HCT116 (cell line): ENCODE measurements at regions of chr9 and their contacts with region 1.

Region 1: DNA sequence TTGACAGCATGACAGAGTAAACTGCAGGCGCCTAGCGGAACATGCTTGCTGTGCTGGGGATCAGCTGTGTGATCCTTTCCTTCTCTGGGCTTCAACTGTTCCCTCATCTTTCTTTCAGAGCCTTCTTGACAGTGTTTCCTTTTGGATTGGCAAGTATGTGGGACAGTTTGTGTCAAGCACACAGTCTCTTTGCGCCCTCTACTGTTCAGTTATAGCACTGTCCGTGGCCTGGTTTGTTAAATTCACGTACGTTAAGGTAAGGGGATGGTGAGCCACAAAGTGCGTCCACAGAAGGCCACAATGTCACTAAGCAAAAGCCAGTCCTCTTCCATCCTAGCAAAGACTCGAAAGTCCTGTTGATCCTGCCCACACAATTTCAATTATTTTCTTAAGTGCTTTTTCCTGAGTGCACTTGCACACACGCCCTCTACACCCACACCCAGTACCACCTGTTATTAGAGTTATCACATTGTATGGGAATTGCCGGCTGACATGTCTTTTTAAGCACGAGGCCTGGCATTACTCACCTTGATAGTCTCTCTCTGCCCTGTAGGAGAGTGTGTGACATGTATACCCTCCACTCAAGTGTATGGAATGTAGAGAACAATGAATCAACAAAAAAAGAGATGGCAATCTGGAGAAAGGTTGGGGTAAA is 22.5 kb upstream of the PTPN3 start:
- DNase-seq: peak; percentile 72
- ATAC-seq: peak; percentile 99
- H3K4me3 ChIP-seq: no peak overlapping the region
- H3K27ac ChIP-seq: no peak overlapping the region
- H3K4me1 ChIP-seq: peaks cover 0 to 3% of the 10 kb centered on the region in 2 experiments; a peak in 1 of 4 replicates
- H3K27me3 ChIP-seq: no peaks in the 10 kb centered on the region; the same call in 1 of the 2 replicates
- CTCF ChIP-seq: peak; percentile 89 to 97 (median 91)
- POLR2A ChIP-seq: no peak
- RAD21 ChIP-seq: peak; percentile 97

Region 2: GRCh38 chr9:109192732-109193361 is 327.8 kb before region 1 on chr9:
- CTCF ChIA-PET with region 1: no interaction called
- POLR2A ChIA-PET with region 1: no interaction called
- RAD21 ChIA-PET with region 1: no interaction called
- intact Hi-C with region 1: loop called (anchors 5 kb)
- DNase-seq: peak; percentile 15
- ATAC-seq: peak; percentile 81
- H3K4me3 ChIP-seq: no peak overlapping the region
- H3K27ac ChIP-seq: no peak overlapping the region
- H3K4me1 ChIP-seq: no peaks in the 10 kb centered on the region
- H3K27me3 ChIP-seq: no peaks in the 10 kb centered on the region
- CTCF ChIP-seq: peak; percentile 61 to 69 (median 61); a peak in 5 of 6 replicates
- POLR2A ChIP-seq: no peak
- RAD21 ChIP-seq: peak; percentile 83

Region 3: DNA sequence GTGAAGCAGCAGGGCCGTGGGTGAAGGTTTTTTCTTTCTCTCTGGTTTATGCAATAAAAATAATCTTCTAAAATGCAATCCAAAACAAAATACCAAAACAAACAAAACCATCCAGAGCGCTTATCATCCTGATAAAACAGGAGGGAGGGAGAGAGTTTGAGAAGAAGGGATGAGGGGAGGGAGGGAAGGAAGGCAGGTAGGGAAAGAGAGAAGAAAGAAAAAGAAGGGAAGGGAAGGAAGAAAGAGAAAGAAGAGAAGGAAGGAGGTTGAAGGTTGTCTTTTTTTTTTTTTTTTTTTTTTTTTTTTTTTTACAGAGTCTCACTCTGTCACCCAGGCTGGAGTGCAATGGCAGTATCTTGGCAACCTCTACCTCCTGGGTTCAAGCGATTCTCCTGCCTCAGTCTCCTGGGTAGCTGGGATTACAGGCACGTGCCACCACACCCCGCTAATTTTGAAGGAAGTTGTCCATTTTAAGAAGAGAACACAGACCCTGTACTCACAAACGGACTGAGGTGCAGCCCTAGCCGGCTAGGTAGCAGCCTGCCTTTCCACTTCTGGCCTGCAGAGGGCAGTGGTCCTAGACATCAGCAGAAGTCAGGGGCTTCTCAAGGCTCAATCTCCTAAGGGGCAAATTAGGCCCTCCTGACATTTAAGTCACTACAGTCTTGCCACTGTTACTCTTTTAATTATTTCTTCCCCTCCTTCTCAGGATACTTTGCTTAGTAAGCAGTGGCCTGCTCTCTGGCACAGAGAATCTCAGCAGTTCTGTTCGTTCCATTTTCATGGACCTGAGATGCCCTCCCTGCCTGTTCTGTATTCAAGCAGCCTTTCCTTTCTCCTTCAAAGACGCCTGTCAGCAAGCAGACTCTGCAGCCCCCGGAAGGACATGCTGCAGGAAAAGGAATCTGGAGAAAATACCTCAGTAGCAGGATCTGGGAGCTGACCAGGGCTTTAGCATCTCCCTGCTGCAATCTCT is 276.2 kb before region 1 on chr9:
- CTCF ChIA-PET with region 1: no interaction called
- POLR2A ChIA-PET with region 1: no interaction called
- RAD21 ChIA-PET with region 1: no interaction called
- intact Hi-C with region 1: loop called (anchors 2 kb)
- DNase-seq: peak; percentile 52
- ATAC-seq: peak; percentile 95
- H3K4me3 ChIP-seq: no peak overlapping the region
- H3K27ac ChIP-seq: no peak overlapping the region
- H3K4me1 ChIP-seq: no peaks in the 10 kb centered on the region
- H3K27me3 ChIP-seq: no peaks in the 10 kb centered on the region
- CTCF ChIP-seq: peak; percentile 64 to 96 (median 91); a peak in 5 of 6 replicates
- POLR2A ChIP-seq: no peak
- RAD21 ChIP-seq: peak; percentile 75

Region 4: DNA sequence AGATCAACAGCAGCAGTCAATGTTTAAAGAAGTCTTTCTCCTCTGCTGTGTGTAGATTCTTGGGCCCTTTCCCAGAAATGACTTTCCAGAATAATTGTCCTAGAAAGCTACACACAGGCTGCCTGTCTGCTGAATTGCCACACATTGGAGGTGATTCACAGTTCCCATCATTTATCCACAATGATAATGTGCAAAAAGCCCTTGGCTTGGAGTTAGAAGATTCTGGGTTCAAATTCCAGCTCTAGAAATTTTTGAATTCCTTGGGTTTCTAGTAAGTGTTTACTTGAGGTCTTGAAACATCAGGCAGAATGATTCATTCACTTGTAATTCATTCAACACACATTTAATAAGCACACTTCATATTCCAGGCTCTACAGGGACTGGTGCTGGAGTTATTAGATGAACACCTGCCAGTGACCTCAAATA is 171.2 kb before region 1 on chr9:
- CTCF ChIA-PET with region 1: interaction called, 3 read pairs
- POLR2A ChIA-PET with region 1: no interaction called
- RAD21 ChIA-PET with region 1: no interaction called
- intact Hi-C with region 1: loop called (anchors 10 kb)
- DNase-seq: no peak
- ATAC-seq: no peak
- H3K4me3 ChIP-seq: no peak overlapping the region
- H3K27ac ChIP-seq: no peak overlapping the region
- H3K4me1 ChIP-seq: peaks cover 8 to 28% of the 10 kb centered on the region in 2 experiments; a peak in 3 of 4 replicates
- H3K27me3 ChIP-seq: no peaks in the 10 kb centered on the region
- CTCF ChIP-seq: no peak
- POLR2A ChIP-seq: no peak
- RAD21 ChIP-seq: no peak

Region 5: GRCh38 chr9:109401168-109401989 is 119.2 kb before region 1 on chr9:
- CTCF ChIA-PET with region 1: no interaction called
- POLR2A ChIA-PET with region 1: no interaction called
- RAD21 ChIA-PET with region 1: no interaction called
- intact Hi-C with region 1: loop called (anchors 2 kb)
- DNase-seq: peak; percentile 49
- ATAC-seq: peak; percentile 99
- H3K4me3 ChIP-seq: no peak overlapping the region
- H3K27ac ChIP-seq: no peak overlapping the region
- H3K4me1 ChIP-seq: no peaks in the 10 kb centered on the region
- H3K27me3 ChIP-seq: no peaks in the 10 kb centered on the region
- CTCF ChIP-seq: peak; percentile 82 to 93 (median 82)
- POLR2A ChIP-seq: no peak
- RAD21 ChIP-seq: peak; percentile 71

Region 6: GRCh38 chr9:109440797-109441287 is 79.8 kb before region 1 on chr9:
- CTCF ChIA-PET with region 1: interaction called, 6 read pairs
- POLR2A ChIA-PET with region 1: no interaction called
- RAD21 ChIA-PET with region 1: no interaction called
- intact Hi-C with region 1: loop called (anchors 1 kb)
- DNase-seq: peak; percentile 67
- ATAC-seq: peak; percentile 95
- H3K4me3 ChIP-seq: no peak overlapping the region
- H3K27ac ChIP-seq: no peak overlapping the region
- H3K4me1 ChIP-seq: peaks cover 0 to 8% of the 10 kb centered on the region in 2 experiments; a peak in 2 of 4 replicates
- H3K27me3 ChIP-seq: no peaks in the 10 kb centered on the region
- CTCF ChIP-seq: peak; percentile 77 to 81 (median 79)
- POLR2A ChIP-seq: no peak
- RAD21 ChIP-seq: peak; percentile 85